Transverse colon (tissue), 4 donors: ENCODE measurements at regions of chr4 and their contacts with region 1.

Region 1: DNA sequence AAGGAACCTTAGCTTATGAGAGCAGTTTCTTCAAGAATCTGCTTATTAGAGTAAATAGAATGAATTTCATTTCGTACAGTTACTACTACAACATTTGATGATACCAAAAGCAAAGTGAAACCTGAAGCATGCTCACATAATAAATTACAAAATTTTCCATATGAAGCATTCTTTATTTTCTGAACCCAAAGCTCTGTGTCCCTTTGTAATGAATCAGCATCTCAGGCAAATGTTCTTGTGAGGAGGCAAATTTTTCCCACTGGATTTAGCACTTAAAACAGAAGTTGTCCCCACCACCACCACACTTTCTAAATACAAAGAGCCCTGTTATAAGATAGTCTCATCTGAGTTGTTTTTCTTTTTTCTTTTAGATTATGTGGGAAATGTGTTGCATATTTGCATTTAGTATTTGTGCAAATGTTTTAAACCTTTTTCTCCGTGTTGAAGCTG is 70.7 kb upstream of the NFKB1 start:
- DNase-seq: no peak
- H3K4me3 ChIP-seq: peak overlapping the region; percentile 44 to 86 (median 52)
- H3K27ac ChIP-seq: peak overlapping the region; percentile 72 to 81 (median 76)
- H3K4me1 ChIP-seq: peaks cover 0 to 10% (median 3%) of the 10 kb centered on the region in 4 donors
- H3K27me3 ChIP-seq: no peaks in the 10 kb centered on the region
- CTCF ChIP-seq: no peak
- EP300 ChIP-seq: no peak
- POLR2A ChIP-seq: no peak

Region 2: GRCh38 chr4:103008875-103009729 is 578.6 kb after region 1 on chr4:
- in situ Hi-C with region 1: loop called in 2 of 4 experiments (anchors 5 to 10 kb)
- intact Hi-C with region 1: no loop called
- DNase-seq: no peak
- H3K4me3 ChIP-seq: no peak overlapping the region
- H3K27ac ChIP-seq: no peak overlapping the region
- H3K4me1 ChIP-seq: peaks cover 5 to 24% (median 19%) of the 10 kb centered on the region in 4 donors
- H3K27me3 ChIP-seq: no peaks in the 10 kb centered on the region
- CTCF ChIP-seq: peak; percentile 57 to 66 (median 64)
- EP300 ChIP-seq: no peak
- POLR2A ChIP-seq: no peak